ENCODE measurements at regions of chr9 and their contacts with region 1.

Region 1: GRCh38 chr9:93058355-93059096 is at the start of gene SUSD3:
- DNase-seq: peak; percentile 73
- ATAC-seq: peak; percentile 75
- H3K4me3 Mint-ChIP-seq: peak within 1 kb of the TSS; percentile 87
- H3K27ac Mint-ChIP-seq: peak within 1 kb of the TSS; percentile 95
- H3K4me1 Mint-ChIP-seq: peaks cover 63% of the 10 kb centered on the region
- H3K27me3 Mint-ChIP-seq: no peaks in the 10 kb centered on the region
- CTCF ChIP-seq: no peak
- total RNA-seq, gene SUSD3: 9.1 and 12.9 TPM in 2 replicates

Region 2: DNA sequence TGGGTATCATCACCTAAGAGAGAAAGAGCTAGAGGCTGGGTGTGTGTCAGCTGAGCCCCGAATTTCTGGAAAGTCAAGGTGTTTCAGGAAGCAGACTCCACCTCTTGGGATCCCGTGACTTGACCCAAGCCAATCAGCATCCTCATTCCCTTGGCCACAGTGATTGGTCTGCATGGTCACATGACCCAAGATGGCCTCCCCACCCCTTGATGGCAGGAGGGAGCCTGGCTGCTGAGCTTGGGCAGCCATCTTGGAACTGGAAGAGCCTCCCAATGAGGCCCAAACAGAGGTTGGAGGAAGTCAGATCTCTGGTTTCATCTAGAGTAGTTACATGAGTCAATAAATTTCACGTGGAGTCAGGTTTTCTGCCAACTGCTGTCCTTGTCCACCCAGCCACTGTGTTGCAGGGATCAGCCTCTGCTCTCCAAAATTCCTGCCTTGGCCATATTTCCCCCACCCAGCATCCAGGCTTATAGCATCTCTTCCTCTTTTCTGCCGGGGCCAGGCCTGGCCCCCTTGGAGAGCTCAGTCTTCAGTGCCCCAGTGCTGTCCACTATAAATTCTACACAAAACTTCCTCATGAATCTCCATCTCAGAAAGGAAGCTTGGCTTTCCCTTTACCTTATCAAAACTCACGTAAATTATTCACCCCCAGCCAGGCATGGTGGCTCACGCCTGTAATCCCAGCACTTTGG is 17.3 kb before region 1 on chr9:
- CTCF ChIA-PET with region 1: no interaction called
- POLR2A ChIA-PET with region 1: interaction called, 3 read pairs
- intact Hi-C with region 1: loop called (anchors 1 kb)
- DNase-seq: no peak
- ATAC-seq: no peak
- H3K4me3 Mint-ChIP-seq: no peak overlapping the region
- H3K27ac Mint-ChIP-seq: no peak overlapping the region
- H3K4me1 Mint-ChIP-seq: peaks cover 41% of the 10 kb centered on the region
- H3K27me3 Mint-ChIP-seq: no peaks in the 10 kb centered on the region
- CTCF ChIP-seq: no peak

Region 3: DNA sequence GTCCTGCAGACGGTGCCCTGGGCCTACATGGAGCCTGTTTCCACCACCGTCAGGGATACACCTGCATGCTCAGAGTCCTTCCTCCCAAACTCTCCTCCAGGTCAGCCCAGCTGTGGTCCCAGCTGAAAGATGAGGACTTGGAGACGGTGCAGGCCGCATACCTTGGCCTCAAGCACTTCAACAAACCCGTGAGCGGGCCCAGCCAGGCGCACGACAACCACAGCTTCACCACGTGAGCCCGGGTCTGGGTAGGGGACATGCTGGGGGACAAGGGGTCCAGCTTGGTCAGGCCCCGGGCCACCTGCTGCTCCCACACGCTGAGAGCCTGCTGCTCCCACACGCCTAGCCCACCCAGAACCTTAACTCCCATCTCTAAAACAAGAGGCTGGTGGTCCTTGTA is 20.8 kb after region 1 on chr9:
- CTCF ChIA-PET with region 1: no interaction called
- POLR2A ChIA-PET with region 1: no interaction called
- intact Hi-C with region 1: no loop called
- DNase-seq: peak; percentile 5
- ATAC-seq: no peak
- H3K4me3 Mint-ChIP-seq: no peak overlapping the region
- H3K27ac Mint-ChIP-seq: no peak overlapping the region
- H3K4me1 Mint-ChIP-seq: no peaks in the 10 kb centered on the region
- H3K27me3 Mint-ChIP-seq: no peaks in the 10 kb centered on the region
- CTCF ChIP-seq: no peak

Region 4: GRCh38 chr9:93095205-93096130 is 36.9 kb after region 1 on chr9:
- CTCF ChIA-PET with region 1: no interaction called
- POLR2A ChIA-PET with region 1: interaction called, 53 read pairs
- intact Hi-C with region 1: loop called (anchors 1 kb)
- DNase-seq: peak; percentile 100
- ATAC-seq: peak; percentile 79
- H3K4me3 Mint-ChIP-seq: peak overlapping the region; percentile 86
- H3K27ac Mint-ChIP-seq: peak overlapping the region; percentile 99
- H3K4me1 Mint-ChIP-seq: peaks cover 83% of the 10 kb centered on the region
- H3K27me3 Mint-ChIP-seq: no peaks in the 10 kb centered on the region
- CTCF ChIP-seq: no peak

Region 5: GRCh38 chr9:93119953-93120845 is 61.7 kb after region 1 on chr9:
- CTCF ChIA-PET with region 1: no interaction called
- POLR2A ChIA-PET with region 1: no interaction called
- intact Hi-C with region 1: no loop called
- DNase-seq: no peak
- ATAC-seq: peak; percentile 93
- H3K4me3 Mint-ChIP-seq: peak overlapping the region; percentile 67
- H3K27ac Mint-ChIP-seq: peak overlapping the region; percentile 72
- H3K4me1 Mint-ChIP-seq: peaks cover 21% of the 10 kb centered on the region
- H3K27me3 Mint-ChIP-seq: no peaks in the 10 kb centered on the region
- CTCF ChIP-seq: no peak